ENCODE measurements at regions of chr1 and their contacts with region 1.

Region 1: DNA sequence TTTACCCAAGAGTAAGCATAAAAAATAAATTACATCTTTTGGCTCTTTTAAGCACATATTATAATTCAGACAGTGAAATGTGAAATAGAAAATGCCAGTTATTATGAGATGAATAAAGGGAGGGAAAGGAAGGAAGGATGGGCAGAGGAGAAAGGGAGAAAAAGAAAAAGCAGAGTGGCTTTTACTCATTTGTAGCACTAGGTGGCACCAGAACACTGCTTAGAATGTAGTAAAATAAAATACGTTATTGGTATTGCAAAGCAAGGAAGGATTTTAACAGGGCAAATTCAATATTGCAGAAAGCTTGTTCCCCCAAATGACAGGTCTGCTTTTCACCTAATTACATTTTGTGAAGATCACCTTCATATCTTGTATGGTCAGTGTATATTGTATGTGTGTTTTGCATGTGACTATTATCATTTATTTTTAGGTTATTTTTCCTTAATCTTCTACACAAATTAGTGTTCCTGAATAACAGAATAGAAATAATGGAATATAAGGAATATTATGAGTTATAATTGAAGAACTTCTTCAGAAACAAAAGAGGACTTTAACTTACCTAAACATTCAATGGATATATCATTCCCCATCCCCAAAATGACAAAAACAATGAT is 9.1 kb upstream of the PCNX2 start:
- DNase-seq: peak; percentile 63
- H3K4me3 Mint-ChIP-seq: no peak overlapping the region
- H3K27ac Mint-ChIP-seq: no peak overlapping the region
- H3K4me1 Mint-ChIP-seq: no peaks in the 10 kb centered on the region
- H3K27me3 Mint-ChIP-seq: no peaks in the 10 kb centered on the region
- CTCF ChIP-seq: peak; percentile 98

Region 2: GRCh38 chr1:233061265-233061664 is 243.3 kb before region 1 on chr1:
- CTCF ChIA-PET with region 1: no interaction called
- POLR2A ChIA-PET with region 1: no interaction called
- intact Hi-C with region 1: no loop called
- DNase-seq: no peak
- H3K4me3 Mint-ChIP-seq: no peak overlapping the region
- H3K27ac Mint-ChIP-seq: no peak overlapping the region
- H3K4me1 Mint-ChIP-seq: peaks cover 5% of the 10 kb centered on the region
- H3K27me3 Mint-ChIP-seq: no peaks in the 10 kb centered on the region
- CTCF ChIP-seq: no peak

Region 3: DNA sequence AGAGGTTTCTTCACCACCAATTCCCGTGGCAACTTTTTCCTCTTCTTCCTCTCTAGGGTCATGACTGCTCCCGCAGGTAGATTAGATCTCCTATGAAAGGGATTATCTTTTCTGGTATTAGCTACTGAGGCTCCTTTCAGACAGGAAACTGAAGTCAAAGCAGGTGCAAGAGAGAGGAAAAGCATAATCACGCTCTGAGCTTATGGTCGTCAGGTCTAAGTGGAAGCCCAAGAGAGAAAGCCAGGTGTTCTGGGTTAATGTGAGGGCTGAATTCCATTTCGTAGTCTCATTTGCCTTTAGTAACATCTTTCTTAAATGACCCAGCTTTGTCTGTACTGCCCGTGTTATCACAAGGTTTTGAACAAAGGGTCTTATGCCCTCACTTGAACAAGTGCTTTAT is 14.7 kb after region 1 on chr1:
- CTCF ChIA-PET with region 1: interaction called, 60 read pairs
- POLR2A ChIA-PET with region 1: interaction called, 8 read pairs
- intact Hi-C with region 1: no loop called
- DNase-seq: no peak
- H3K4me3 Mint-ChIP-seq: no peak overlapping the region
- H3K27ac Mint-ChIP-seq: no peak overlapping the region
- H3K4me1 Mint-ChIP-seq: no peaks in the 10 kb centered on the region
- H3K27me3 Mint-ChIP-seq: peaks cover 29% of the 10 kb centered on the region
- CTCF ChIP-seq: no peak

Region 4: DNA sequence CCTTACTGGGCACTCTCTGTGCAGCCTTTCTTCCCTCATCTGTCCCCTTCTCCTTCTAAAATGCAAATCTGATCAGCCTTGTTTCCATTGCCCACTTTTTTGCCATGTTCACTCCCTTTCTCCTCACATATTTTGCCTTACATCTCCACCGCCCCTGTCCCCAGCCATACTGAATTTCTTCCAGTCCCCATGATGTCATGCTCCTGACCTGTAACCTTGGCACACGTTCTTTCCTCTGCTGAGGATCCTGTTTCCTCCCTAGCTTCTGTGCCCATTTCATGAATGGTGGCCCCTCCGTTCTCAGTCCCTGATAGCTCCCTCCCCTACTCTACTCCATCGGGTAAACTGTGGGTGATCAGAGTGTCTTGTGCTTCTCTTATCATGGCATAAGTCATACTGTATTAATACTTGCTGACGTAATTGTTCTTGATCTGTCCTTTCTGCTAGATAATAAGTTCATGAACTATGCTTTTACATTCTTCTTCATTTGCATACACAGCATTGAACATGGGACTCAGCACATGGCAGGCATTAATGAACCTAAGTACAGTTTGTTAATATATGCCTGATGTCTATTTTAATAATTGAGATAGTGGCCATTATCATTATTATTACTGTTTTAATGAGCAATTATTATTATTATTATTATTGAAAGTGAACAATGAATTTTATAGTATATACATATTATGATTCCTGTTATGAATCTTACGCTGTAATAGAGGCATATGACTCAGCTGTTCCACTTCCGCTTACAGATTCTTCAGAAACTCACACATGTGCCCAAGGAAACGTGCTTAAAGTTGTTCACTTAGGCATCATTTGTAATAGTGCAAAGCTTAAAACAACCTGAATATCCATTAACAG is 51.5 kb after region 1 on chr1:
- CTCF ChIA-PET with region 1: interaction called, 62 read pairs
- POLR2A ChIA-PET with region 1: interaction called, 4 read pairs
- intact Hi-C with region 1: no loop called
- DNase-seq: no peak
- H3K4me3 Mint-ChIP-seq: no peak overlapping the region
- H3K27ac Mint-ChIP-seq: no peak overlapping the region
- H3K4me1 Mint-ChIP-seq: peaks cover 6% of the 10 kb centered on the region
- H3K27me3 Mint-ChIP-seq: no peaks in the 10 kb centered on the region
- CTCF ChIP-seq: no peak

Region 5: DNA sequence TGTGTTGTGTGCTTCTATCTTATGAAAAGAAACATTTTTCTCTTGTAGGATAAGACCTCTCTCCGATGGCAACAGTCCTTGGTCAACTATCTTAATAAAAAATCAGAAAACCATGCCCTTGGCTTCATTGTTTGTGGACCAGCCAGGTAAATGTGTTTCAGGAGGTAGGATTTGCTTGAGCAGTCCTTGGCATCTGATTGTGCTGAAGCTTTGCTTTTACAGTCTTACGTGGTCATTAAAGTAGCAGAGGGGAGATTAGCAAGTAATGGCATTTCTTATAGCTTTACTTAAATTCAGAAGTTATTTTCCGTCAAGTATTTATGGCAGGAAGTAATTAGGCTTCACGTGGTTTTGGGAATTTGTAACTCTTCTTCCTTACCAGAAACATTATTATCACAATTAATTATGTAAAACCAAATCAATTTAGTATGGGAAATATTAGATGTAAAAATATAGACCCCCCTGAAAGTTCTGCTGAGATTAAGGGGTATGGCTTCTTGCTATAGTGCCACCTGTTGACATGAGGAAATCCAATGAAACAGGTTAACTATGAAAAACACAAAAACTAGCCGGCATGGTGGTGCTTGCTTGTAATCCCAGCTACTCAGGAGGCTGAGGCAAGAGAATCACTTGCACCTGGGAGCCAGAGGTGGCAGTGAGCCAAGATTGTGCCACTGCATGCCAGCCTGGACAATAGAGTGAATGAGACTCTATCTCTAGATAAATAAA is 72.0 kb after region 1 on chr1:
- CTCF ChIA-PET with region 1: interaction called, 12 read pairs
- POLR2A ChIA-PET with region 1: no interaction called
- intact Hi-C with region 1: no loop called
- DNase-seq: peak; percentile 33
- H3K4me3 Mint-ChIP-seq: no peak overlapping the region
- H3K27ac Mint-ChIP-seq: no peak overlapping the region
- H3K4me1 Mint-ChIP-seq: no peaks in the 10 kb centered on the region
- H3K27me3 Mint-ChIP-seq: no peaks in the 10 kb centered on the region
- CTCF ChIP-seq: peak; percentile 15

Region 6: DNA sequence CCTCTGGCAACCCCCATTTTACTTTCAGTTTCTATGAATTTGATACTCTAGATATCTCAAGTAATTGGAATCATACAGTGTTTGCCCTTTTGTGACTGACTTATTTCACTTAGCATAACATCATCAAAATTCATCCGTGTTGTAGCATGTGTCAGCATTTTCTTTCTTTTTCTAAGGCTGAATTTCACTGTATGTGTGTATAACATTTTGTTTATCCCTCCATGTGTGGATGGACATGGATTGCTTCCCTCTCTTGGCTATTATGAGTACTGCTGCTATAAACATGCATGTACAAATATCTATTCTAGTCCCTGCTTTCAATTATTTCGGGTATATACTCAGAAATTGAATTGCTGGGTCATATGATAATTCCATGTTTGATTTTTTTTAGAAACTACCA is 120.2 kb after region 1 on chr1:
- CTCF ChIA-PET with region 1: interaction called, 3 read pairs
- POLR2A ChIA-PET with region 1: interaction called, 3 read pairs
- intact Hi-C with region 1: loop called (anchors 1 kb)
- DNase-seq: peak; percentile 54
- H3K4me3 Mint-ChIP-seq: no peak overlapping the region
- H3K27ac Mint-ChIP-seq: no peak overlapping the region
- H3K4me1 Mint-ChIP-seq: peaks cover 5% of the 10 kb centered on the region
- H3K27me3 Mint-ChIP-seq: no peaks in the 10 kb centered on the region
- CTCF ChIP-seq: peak; percentile 40